ENCODE measurements at regions of chr15 and their contacts with region 1.

Region 1: DNA sequence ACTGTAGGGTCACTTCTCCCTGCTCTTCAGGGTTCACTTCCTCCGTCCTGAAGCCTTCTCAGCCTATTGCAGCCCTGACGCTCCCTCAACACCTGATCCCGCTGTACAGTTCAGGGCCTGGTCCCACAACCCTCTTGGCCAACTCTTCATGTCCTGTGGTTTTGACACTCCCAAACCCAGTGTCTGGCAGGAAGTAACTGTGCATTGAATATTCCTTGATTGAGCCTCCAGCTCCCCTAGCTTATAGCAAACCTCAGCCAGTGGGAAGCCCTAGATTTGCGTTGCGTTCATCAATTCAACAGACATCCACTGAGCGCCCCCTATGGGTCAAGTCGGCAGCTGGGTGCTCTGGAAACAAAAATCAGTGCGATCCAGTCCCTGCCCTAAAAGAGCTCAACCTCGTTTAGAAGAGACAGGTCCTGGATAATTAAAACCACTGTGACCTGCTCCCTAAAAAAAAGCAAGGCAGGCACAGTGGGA is 13.5 kb downstream of the UBAP1L start:
- DNase-seq: peak; percentile 76
- ATAC-seq: peak; percentile 52 to 61

Region 2: DNA sequence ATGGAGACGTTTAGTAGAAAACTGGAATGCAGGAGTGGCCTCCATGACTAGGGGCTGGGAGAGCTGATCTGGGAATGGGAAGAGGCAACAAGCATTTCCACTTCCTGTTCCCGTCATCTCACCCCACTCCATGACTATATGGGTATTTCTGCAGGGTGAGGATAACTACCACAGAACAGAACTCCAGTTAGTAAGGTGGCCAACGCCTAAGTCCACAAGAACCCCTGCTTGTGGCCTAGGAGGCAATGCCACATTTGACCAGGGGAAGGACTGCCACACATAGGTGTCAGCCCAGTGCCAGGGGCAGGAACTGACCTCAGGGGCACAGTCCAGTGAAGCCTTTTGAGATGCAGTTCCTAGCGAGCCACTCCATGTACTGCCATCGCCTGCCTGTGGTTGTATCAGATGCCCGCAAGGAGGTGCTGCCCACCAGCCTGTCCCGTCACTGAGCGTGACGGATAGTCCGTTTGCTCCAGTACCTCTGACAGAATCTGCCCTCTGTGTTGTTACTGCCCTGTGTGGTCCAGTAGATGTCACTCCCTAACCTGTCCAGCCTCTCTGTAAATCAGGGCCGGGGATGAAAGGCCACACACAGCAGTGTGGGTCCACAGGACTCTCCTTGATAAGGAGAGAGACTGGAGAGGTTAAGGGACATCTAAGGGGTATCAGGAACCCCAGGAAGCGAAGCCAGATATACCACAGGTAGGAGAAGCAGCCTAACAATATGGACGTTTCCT is 68.5 kb before region 1 on chr15:
- intact Hi-C with region 1: loop called in 1 of 2 experiments (anchors 5 kb)
- DNase-seq: peak; percentile 61
- ATAC-seq: peak; percentile 51 to 65

Region 3: DNA sequence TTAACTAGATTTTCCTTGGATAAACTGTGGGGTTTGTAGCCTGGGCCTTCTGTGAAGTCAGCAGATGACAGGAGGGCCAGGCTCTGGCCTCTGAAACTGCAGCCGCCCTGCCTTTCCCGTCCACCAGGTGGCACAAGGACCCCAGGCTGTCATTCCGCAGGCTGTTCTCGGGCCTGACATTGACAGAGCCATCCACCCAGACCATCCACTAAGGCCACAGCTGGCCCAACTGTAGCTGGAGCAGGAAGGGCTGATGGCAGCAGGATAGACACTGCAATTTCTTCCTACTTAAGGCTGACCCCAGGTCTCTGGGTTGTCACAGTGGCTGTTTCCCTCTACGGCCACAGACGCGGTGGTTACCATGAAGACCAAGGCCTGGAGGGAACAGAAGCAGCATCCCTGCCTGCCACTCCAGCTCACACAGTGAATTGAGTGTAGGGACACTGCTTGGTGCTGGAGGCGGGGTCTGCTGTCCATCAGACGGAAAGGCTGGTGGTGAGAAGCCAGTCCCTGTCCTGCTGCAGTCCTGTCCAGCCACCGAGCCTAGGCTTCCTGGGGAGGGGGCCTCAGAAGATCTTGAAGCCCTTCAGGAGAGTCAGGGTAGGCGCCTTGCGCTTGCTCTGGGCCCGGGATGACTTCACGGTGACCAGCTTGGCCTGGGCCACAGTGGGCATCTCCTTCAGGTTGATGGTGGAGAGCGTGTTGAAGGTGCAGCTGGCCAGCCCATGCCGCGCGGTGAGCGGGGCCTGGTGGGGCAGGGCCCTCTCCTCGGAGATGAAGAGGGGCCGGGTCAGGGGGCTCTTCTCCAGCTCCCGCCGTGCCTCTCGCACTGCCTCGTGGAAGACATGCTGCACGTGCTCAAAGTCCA is 46.9 kb before region 1 on chr15:
- intact Hi-C with region 1: loop called in 1 of 2 experiments (anchors 5 kb)
- DNase-seq: peak; percentile 77
- ATAC-seq: peak; percentile 67 to 81

Region 4: DNA sequence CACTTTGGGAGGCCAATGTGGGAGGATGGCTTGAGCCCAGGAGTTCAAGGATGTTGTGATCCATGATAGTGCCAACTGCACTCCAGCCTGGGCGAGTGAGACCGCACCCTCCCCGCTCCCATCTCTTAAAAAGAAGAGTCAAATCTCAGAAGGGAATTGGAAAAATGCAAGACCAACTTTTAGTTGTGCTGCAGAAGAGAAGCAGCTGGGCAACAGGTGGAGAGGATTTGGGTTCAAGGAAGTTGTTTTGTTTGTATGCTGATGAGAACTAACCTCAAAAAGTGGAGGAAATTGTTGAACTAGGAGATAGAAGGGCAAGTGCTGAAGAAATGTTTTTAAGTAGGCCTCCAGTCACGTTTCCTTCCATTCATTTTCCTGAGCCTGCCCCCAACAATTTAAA is 45.0 kb after region 1 on chr15:
- intact Hi-C with region 1: no loop called
- DNase-seq: no peak
- ATAC-seq: no peak

Region 5: GRCh38 chr15:65245096-65245856 is 143.8 kb after region 1 on chr15:
- intact Hi-C with region 1: no loop called
- DNase-seq: peak; percentile 82
- ATAC-seq: peak; percentile 88 to 92

Measured in left cardiac atrium (tissue), 4 donors.